HEK293 (cell line): ENCODE measurements at regions of chr6 and their contacts with region 1.

Region 1: DNA sequence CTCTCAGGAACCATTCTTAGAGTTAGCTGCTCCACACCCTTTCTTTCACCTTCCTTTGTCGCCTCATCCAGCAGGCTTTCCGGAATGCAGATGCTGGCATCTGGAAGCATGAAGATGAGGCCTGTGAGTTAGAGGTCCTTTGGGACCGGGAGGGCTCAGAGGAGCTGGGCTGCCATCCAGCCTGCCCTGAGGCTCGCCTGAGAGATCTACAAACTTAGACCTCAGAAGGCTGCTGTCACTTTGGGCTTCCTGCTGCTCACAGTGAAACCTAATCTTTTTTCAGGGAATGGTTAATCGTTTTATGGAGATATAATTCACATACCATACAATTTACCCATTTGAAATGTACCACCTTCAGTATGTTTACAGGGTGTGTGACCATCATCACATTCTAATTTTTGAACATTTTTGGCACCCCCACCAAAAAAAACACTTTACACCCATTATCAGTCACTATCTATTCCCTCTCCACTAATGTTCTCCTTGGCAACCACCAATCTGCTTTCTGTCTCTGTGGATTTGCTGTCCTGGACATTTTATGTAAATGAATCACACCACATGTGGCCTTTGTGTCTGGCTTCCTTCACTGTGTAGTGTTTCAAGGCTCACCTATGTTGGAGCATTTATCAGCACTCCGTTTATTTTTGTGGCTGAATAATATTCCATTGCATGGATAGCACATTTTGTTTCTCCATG is 20.0 kb upstream of the MPC1 start:
- H3K4me3 ChIP-seq: no peak overlapping the region
- H3K27ac ChIP-seq: no peak overlapping the region
- H3K4me1 ChIP-seq: peaks cover 5% of the 10 kb centered on the region
- CTCF ChIP-seq: no peak

Region 2: GRCh38 chr6:166156942-166157341 is 245.8 kb before region 1 on chr6:
- CTCF ChIA-PET with region 1: interaction called, 69 read pairs
- POLR2A ChIA-PET with region 1: interaction called, 3 read pairs
- H3K4me3 ChIP-seq: no peak overlapping the region
- H3K27ac ChIP-seq: no peak overlapping the region
- H3K4me1 ChIP-seq: no peaks in the 10 kb centered on the region
- CTCF ChIP-seq: peak; percentile 27; the same call in 1 of the 2 replicates

Region 3: GRCh38 chr6:166275714-166276166 is 127.0 kb before region 1 on chr6:
- CTCF ChIA-PET with region 1: interaction called, 94 read pairs
- POLR2A ChIA-PET with region 1: interaction called, 3 read pairs
- H3K4me3 ChIP-seq: no peak overlapping the region
- H3K27ac ChIP-seq: no peak overlapping the region
- H3K4me1 ChIP-seq: no peaks in the 10 kb centered on the region
- CTCF ChIP-seq: peak; percentile 94

Region 4: DNA sequence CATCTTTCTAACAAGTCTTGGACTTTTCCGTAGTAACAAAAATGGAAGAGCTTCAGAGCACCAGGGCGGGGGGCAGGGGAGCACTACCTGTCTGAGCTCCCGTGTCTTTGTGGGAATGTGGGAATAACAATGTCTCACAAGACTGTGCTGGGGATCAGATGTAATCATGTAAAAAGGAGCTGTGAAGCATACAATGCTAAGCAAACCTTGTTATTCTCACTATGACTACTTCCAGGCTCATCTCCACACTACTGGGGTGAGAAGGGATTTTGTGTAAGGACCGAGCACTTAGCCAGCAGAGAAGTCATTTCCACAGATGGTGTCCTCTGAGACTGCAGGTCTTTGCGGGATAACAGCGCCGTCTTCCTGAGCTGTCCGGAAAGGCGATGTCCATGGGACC is 121.6 kb before region 1 on chr6:
- CTCF ChIA-PET with region 1: interaction called, 94 read pairs
- POLR2A ChIA-PET with region 1: interaction called, 3 read pairs
- H3K4me3 ChIP-seq: no peak overlapping the region
- H3K27ac ChIP-seq: no peak overlapping the region
- H3K4me1 ChIP-seq: no peaks in the 10 kb centered on the region
- CTCF ChIP-seq: no peak

Region 5: DNA sequence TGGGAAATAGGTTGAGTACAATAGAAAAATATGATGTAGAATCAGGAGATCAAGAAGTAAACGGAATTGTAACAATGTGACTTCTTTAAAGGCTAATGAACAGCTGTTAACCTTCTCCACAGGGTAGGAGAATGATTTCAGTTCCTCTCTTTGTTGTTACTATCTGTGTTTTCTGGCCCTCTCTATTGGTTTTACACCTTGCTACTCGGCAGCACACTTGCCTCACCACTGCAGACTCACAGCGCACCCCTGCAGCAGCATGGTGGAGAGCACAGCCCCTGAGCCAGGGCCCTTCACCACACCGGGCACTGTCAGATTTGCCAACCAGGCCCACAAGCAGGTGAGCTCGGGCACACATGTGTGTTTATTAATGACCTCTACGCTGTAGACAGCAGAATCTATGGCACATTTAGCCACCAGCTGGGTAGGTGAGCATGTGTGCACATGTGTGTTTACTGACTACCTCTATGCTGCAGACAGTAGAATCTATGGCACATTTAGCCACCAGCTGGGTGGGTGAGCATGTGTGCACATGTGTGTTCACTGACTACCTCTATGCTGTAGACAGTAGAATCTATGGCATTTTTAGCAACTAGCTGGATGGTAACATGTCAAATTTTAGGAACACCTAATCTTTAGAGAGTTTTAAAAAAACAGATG is 77.2 kb before region 1 on chr6:
- CTCF ChIA-PET with region 1: interaction called, 11 read pairs
- POLR2A ChIA-PET with region 1: no interaction called
- H3K4me3 ChIP-seq: no peak overlapping the region
- H3K27ac ChIP-seq: no peak overlapping the region
- H3K4me1 ChIP-seq: 0 out of 2 replicates have a peak, but pooled peaks cover under 1% of the 10 kb centered on the region
- CTCF ChIP-seq: no peak

Region 6: DNA sequence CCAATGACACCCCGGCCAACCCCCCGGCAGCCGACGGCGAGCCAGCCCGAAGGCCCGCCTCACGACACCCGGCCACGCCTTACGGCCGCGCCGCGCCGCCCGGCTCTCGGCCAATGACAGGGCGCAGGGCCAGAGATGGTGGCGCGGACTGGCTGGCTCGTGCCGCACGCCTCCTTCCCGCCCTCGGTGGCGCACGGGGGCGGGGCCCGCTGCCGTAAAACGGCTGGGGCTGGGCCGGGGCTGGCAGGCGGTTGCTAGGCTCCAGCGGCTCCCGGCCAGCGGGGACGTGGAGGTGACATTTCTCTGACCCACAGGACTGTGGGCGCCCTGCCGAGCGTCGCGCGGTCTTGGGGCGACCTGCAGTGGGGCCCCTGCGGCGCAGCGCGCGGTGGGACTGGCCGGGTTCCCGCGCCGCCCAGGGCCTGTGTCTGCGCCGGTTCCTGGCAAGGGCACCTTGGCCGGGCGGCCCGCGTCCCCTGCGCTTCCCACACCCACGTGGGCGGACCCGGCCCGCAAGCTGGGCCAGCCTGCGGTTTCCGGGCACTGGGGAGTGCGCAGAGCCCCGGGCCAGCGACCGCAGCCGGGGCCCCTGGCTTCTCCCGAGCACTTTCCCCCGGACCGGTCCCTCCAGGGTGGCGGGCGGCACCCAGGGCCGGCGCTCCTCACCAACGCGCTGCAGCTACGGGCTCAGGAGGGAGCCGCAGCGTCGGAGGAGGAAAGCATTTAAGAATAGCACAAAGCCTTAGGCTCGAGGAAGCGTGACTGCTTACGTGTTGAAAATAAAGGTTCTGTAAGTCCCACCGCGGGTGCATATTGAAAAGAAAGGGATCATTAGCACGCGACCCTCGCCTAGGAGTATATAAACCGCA is 19.6 kb before region 1 on chr6 and contains the start of gene MPC1:
- CTCF ChIA-PET with region 1: interaction called, 27 read pairs
- POLR2A ChIA-PET with region 1: interaction called, 4 read pairs
- H3K4me3 ChIP-seq: peak within 1 kb of the TSS; percentile 82
- H3K27ac ChIP-seq: peak within 1 kb of the TSS; percentile 69
- H3K4me1 ChIP-seq: 0 out of 2 replicates have a peak, but pooled peaks cover 3% of the 10 kb centered on the region
- CTCF ChIP-seq: no peak